Activated CD4-positive, alpha-beta T cell treated with anti-CD3 and anti-CD28 coated beads, Interleukin-2, amount 10 ng/mL, durations not matched to agents 24 days and 14 days (primary cell): ENCODE measurements at regions of chr7 and their contacts with region 1.

Region 1: DNA sequence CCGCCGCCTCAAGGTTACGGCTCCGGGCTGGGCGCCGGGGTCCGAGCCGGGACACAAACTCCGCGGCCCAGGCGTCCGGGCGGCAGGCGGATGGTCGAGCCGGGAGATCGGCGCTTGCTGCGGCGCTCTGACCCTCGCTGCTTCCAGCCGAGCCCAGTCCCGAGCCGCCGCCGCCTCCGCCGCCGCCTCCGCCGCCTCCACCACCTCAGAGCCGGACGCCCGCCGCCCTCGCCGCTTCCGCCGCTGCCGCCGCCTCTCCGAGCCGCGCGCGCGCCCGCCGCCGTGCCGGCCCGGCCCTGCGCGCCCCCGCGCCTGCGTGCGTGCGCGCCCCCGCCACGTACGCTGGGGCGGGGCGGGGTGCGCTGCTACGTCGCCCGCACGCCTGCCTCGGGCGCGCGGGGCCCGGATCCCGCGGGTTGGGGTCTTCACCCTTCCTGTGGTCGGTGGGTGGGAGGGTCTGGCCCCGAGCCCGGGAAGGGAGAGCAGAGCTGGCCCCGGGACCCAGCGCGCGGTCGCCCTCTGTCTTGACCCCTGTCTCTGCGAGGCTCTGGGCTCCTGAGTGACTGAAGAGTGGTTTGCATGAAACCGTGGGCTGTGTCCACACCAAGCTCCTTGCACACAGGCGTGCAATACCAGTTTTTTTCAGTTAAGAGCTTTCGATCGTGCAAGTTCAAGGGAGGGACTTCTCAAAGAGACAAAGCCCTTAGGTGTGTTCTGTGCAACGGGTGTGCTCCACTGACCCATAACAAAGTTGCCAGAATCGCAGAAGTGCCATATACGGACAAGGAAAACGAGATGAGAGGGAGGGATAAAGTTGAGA is at the start of gene SMURF1:
- DNase-seq: peak; percentile 94
- H3K4me3 Mint-ChIP-seq: peak within 1 kb of the TSS; percentile 98
- H3K27ac Mint-ChIP-seq: peak within 1 kb of the TSS; percentile 88
- H3K4me1 Mint-ChIP-seq: peaks cover 32% of the 10 kb centered on the region
- H3K27me3 Mint-ChIP-seq: peaks cover 4% of the 10 kb centered on the region
- total RNA-seq, gene SMURF1: 12.5 and 13.1 TPM in 2 replicates

Region 2: GRCh38 chr7:98878365-98879165 is 265.5 kb before region 1 on chr7 and contains the start of gene TRRAP:
- intact Hi-C with region 1: loop called (anchors 2 kb)
- DNase-seq: peak; percentile 92
- H3K4me3 Mint-ChIP-seq: peak within 1 kb of the TSS; percentile 93
- H3K27ac Mint-ChIP-seq: peak within 1 kb of the TSS; percentile 94
- H3K4me1 Mint-ChIP-seq: peaks cover 24% of the 10 kb centered on the region
- H3K27me3 Mint-ChIP-seq: peaks cover 6% of the 10 kb centered on the region
- total RNA-seq, gene TRRAP: 62.7 and 65.1 TPM in 2 replicates

Region 3: GRCh38 chr7:99102809-99103690 is 41.0 kb before region 1 on chr7:
- intact Hi-C with region 1: loop called (anchors 1 kb)
- DNase-seq: peak; percentile 53
- H3K4me3 Mint-ChIP-seq: no peak overlapping the region
- H3K27ac Mint-ChIP-seq: no peak overlapping the region
- H3K4me1 Mint-ChIP-seq: peaks cover 24% of the 10 kb centered on the region
- H3K27me3 Mint-ChIP-seq: no peaks in the 10 kb centered on the region

Region 4: DNA sequence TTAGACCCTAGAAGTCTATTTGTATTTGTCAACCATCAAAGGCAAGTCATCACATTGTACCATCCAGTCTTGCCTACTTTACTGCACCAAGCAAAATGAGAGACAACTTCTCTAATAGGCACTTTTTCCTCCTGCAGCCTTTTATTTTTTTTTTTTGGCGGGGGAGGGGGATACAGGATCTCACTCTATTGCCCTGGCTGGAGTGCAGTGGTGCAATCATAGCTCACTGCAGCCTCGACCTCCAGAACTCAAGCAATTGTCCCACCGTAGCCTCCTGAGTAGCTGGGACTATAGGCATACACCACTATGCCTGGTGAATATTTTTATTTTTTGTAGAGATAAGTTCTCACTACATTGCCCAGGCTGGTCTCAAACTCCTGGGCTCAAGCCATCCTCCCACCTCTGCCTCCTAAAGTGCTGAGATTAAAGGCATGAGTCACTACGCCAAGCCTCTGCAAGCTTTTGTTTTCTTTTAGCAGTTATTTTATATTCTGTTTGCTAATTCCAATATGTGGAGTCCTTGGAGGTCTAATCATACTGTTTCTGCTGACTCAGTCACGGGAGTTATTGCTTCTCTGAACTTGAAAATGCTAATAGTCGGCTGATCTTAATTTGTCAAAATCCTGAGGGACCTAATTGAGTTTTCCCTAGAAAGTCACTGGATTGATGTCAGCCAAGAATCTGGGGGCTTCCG is 49.6 kb after region 1 on chr7:
- intact Hi-C with region 1: no loop called
- DNase-seq: no peak
- H3K4me3 Mint-ChIP-seq: no peak overlapping the region
- H3K27ac Mint-ChIP-seq: no peak overlapping the region
- H3K4me1 Mint-ChIP-seq: no peaks in the 10 kb centered on the region
- H3K27me3 Mint-ChIP-seq: no peaks in the 10 kb centered on the region

Region 5: DNA sequence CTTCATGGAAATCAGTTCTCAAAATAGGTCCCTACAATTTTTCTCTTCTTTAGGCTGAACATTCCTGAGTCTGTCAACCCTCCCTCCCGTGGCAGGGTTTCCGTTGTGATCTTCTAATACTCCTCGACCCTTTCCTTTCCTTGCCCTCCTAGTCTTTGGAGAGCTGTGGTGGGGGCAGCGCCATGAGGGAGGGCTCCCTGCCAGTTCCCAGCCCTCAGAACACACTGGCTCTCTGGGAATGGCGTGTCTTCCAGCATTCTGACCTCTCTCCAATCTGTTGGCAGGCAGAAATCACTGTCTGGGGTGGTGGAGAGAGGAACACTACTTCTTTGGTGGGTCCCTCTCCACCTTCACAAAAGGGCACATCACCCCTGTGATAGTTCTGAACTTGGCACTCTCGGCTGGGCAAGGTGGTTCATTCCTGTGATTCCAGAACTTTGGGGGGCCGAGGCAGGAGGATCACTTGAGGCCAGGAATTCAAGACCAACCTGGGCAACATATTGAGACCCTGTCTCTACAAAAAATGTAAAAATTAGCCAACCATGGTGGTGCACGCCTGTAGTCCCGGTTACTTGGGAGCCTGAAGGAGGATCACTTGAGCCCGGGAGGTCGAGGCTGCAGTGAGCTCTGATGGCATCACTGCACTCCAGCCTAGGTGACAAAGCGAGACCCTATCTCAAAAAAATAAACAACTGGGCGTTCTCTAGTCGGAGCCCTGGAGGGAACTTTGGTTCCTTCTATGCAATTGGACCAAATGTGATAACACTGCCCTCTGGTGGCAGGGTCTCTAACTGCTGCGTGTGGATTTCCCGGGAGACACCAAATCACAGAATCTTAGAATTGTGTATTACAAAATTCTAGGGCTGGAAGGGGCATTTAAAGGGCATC is 168.5 kb after region 1 on chr7:
- intact Hi-C with region 1: loop called (anchors 2 kb)
- DNase-seq: peak; percentile 92
- H3K4me3 Mint-ChIP-seq: no peak overlapping the region
- H3K27ac Mint-ChIP-seq: no peak overlapping the region
- H3K4me1 Mint-ChIP-seq: peaks cover 10% of the 10 kb centered on the region
- H3K27me3 Mint-ChIP-seq: no peaks in the 10 kb centered on the region

Region 6: GRCh38 chr7:99325545-99326407 is 181.7 kb after region 1 on chr7 and contains the start of gene ARPC1A:
- intact Hi-C with region 1: loop called (anchors 5 kb)
- DNase-seq: peak; percentile 98
- H3K4me3 Mint-ChIP-seq: peak within 1 kb of the TSS; percentile 91
- H3K27ac Mint-ChIP-seq: peak within 1 kb of the TSS; percentile 90
- H3K4me1 Mint-ChIP-seq: peaks cover 35% of the 10 kb centered on the region
- H3K27me3 Mint-ChIP-seq: peaks cover 3% of the 10 kb centered on the region
- total RNA-seq, gene ARPC1A: 76.0 and 80.8 TPM in 2 replicates

Region 7: GRCh38 chr7:99380032-99380822 is 236.2 kb after region 1 on chr7:
- intact Hi-C with region 1: loop called (anchors 5 kb)
- DNase-seq: peak; percentile 83
- H3K4me3 Mint-ChIP-seq: peak overlapping the region; percentile 77
- H3K27ac Mint-ChIP-seq: peak overlapping the region; percentile 90
- H3K4me1 Mint-ChIP-seq: peaks cover 44% of the 10 kb centered on the region
- H3K27me3 Mint-ChIP-seq: no peaks in the 10 kb centered on the region